ENCODE measurements at regions of chr12 and their contacts with region 1.

Region 1: DNA sequence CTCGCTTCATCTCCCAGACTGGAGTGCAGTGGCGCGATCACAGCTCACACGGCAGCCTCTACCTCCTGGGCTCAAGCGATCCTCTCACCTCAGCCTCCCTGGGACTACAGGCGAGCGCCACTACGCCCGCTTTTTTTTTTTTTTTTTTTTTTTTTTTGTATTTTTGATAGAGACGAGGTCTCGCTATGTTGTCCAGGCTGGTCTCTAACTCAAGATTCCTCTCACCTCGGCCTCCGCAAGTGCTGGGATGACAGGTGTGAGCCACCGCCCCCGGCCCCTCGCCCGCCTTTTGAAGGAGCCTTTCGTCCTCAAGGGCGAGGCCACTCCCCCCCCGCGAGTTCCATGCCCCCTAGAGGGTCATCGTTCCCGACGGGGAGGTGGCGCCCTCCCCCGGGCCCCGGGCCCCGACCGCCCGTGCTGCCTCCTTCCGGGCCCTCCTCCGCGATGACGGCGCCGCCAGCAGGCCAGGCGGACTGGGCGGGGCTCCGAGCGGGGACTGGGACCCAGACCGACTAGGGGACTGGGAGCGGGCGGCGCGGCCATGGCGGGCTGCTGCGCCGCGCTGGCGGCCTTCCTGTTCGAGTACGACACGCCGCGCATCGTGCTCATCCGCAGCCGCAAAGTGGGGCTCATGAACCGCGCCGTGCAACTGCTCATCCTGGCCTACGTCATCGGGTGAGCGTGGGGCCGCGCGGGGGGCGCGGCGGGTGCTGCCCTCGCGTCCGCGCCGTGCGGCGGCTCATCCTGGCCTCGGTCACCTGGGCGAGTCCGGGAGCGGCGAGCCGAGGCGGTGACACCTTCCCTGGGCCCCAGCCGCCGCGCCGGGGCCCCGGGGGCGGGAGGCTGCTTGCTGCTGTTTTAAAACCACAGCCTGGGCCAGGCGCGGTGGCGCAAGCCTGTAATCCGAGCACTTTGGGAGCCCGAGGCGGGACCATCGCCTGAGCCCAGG is at the start of gene P2RX4:
- DNase-seq: peak; percentile 92 to 97 (median 96)
- ATAC-seq: peak; percentile 99
- H3K4me3 ChIP-seq: peak within 1 kb of the TSS; percentile 91
- H3K27ac ChIP-seq: peak within 1 kb of the TSS; percentile 89
- H3K4me1 ChIP-seq: peaks cover 11 to 24% of the 10 kb centered on the region in 2 experiments; a peak in 4 of 5 replicates
- H3K27me3 ChIP-seq: no peaks in the 10 kb centered on the region
- CTCF ChIP-seq: peak; percentile 45 to 95 (median 78); a peak in 5 of 6 replicates
- EP300 ChIP-seq: no peak
- POLR2A ChIP-seq: peak; percentile 92
- RAD21 ChIP-seq: peak; percentile 75 to 77
- polyA plus RNA-seq, gene P2RX4: 6.6 to 10.0 TPM

Region 2: GRCh38 chr12:120710031-120710804 is 499.7 kb before region 1 on chr12 and contains the start of gene UNC119B:
- CTCF ChIA-PET with region 1: no interaction called
- POLR2A ChIA-PET with region 1: no interaction called
- in situ Hi-C with region 1: no loop called
- intact Hi-C with region 1: no loop called
- DNase-seq: peak; percentile 75 to 92 (median 90)
- ATAC-seq: peak; percentile 94
- H3K4me3 ChIP-seq: peak within 1 kb of the TSS; percentile 83
- H3K27ac ChIP-seq: peak within 1 kb of the TSS; percentile 71
- H3K4me1 ChIP-seq: peaks cover 7 to 17% of the 10 kb centered on the region in 2 experiments; a peak in 4 of 5 replicates
- H3K27me3 ChIP-seq: no peaks in the 10 kb centered on the region
- CTCF ChIP-seq: no peak
- EP300 ChIP-seq: no peak
- POLR2A ChIP-seq: peak; percentile 67
- RAD21 ChIP-seq: no peak
- polyA plus RNA-seq, gene UNC119B: 4.0 to 6.5 TPM

Region 3: GRCh38 chr12:121110211-121110940 is 99.5 kb before region 1 on chr12:
- CTCF ChIA-PET with region 1: interaction called, 3 read pairs
- POLR2A ChIA-PET with region 1: no interaction called
- in situ Hi-C with region 1: loop called (anchors 5 kb)
- intact Hi-C with region 1: loop called (anchors 5 kb)
- DNase-seq: peak; percentile 65 to 80 (median 75)
- ATAC-seq: peak; percentile 92
- H3K4me3 ChIP-seq: no peak overlapping the region
- H3K27ac ChIP-seq: no peak overlapping the region
- H3K4me1 ChIP-seq: no peaks in the 10 kb centered on the region
- H3K27me3 ChIP-seq: peaks cover 2 to 14% of the 10 kb centered on the region in 2 experiments; a peak in 2 of 5 replicates
- CTCF ChIP-seq: peak; percentile 86 to 93 (median 92)
- EP300 ChIP-seq: no peak
- POLR2A ChIP-seq: no peak
- RAD21 ChIP-seq: peak; percentile 90 to 94

Measured in K562 (cell line).